Activated T-helper 1 cell treated with anti-CD3 and anti-CD28 coated beads, Interleukin-12 subunit alpha, Interleukin-12 subunit beta, Interleukin-2, Interleukin-4 antibody, amounts not matched to agents 30 ng/mL and 10 ng/mL and 1 ng/mL, durations not matched to agents 14 hours and 24 hours and 36 hours (primary cell): ENCODE measurements at regions of chr5 and their contacts with region 1.

Region 1: GRCh38 chr5:101942321-101943215 is 353.5 kb downstream of the SLCO4C1 start:
- DNase-seq: no peak
- H3K4me3 Mint-ChIP-seq: no peak overlapping the region
- H3K27ac Mint-ChIP-seq: no peak overlapping the region
- H3K4me1 Mint-ChIP-seq: peaks cover 8% of the 10 kb centered on the region
- H3K27me3 Mint-ChIP-seq: no peaks in the 10 kb centered on the region

Region 2: DNA sequence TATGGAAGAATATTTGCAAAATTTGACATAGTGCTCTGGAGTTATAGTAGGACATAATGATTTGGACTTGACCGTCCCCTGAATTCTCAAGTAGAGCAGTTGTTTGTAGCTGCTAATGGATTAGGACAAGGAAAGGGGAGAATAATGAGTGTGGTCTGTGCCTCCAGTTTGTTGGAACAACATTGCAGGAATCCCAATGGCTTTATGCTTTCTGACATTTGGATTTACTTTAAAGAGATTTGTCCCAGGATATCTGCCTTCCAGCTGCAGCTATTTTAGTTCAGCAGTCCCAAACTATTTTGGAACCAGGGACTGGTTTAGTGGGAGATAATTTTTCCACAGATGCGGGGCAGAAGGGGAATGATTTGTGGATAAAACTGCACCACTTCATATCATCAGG is 294.7 kb before region 1 on chr5:
- intact Hi-C with region 1: no loop called
- DNase-seq: no peak
- H3K4me3 Mint-ChIP-seq: no peak overlapping the region
- H3K27ac Mint-ChIP-seq: no peak overlapping the region
- H3K4me1 Mint-ChIP-seq: no peaks in the 10 kb centered on the region
- H3K27me3 Mint-ChIP-seq: no peaks in the 10 kb centered on the region

Region 3: DNA sequence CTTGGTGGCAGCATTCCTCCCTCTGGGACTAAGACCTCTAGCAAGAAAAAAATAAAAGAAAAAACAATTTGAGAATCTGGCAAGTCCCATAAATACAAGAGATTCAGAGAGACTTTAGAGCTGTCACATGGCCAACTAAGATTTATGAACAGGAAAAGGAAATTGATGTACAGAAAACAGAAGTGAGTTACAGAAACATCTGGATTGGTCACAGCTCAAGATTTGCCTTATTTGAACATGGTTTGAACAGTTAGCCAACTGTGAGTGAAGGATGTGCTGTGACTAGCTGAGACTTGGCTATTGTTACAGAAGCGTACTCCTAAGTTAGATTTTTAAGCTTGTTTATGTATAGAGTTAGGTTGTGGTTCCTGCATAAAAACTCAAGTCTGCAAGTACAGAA is 13.3 kb after region 1 on chr5:
- intact Hi-C with region 1: no loop called
- DNase-seq: no peak
- H3K4me3 Mint-ChIP-seq: no peak overlapping the region
- H3K27ac Mint-ChIP-seq: no peak overlapping the region
- H3K4me1 Mint-ChIP-seq: no peaks in the 10 kb centered on the region
- H3K27me3 Mint-ChIP-seq: no peaks in the 10 kb centered on the region

Region 4: DNA sequence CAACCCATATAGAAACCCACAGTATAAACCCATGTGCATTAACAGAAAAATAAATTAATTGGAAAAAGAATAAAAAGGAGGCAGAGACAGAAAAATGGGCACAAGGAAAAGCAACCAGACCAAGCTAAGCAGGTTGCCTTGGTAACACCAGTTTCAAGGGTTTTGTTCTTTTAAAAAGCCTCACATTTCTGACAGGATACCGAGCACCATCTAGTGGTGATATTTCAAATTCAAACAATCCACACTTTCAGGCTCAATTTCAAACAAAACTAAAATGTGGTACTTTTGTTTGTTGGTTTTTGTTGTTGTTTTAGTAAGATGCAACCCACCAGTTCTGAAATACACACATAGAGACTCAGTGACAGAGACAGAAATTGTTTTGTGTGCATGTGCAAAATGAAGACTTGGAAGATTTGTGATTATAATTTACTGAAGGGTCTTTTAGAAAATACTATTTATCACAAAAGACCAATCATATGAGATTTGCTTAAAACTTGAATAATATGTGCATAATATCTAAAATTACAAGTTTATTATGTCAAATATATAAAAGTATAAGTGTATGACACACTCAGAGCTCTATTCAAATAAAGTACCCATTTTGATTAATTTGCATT is 35.3 kb after region 1 on chr5:
- intact Hi-C with region 1: loop called (anchors 1 kb)
- DNase-seq: no peak
- H3K4me3 Mint-ChIP-seq: no peak overlapping the region
- H3K27ac Mint-ChIP-seq: no peak overlapping the region
- H3K4me1 Mint-ChIP-seq: no peaks in the 10 kb centered on the region
- H3K27me3 Mint-ChIP-seq: no peaks in the 10 kb centered on the region

Region 5: GRCh38 chr5:102077920-102078319 is 135.4 kb after region 1 on chr5:
- intact Hi-C with region 1: no loop called
- DNase-seq: no peak
- H3K4me3 Mint-ChIP-seq: no peak overlapping the region
- H3K27ac Mint-ChIP-seq: no peak overlapping the region
- H3K4me1 Mint-ChIP-seq: no peaks in the 10 kb centered on the region
- H3K27me3 Mint-ChIP-seq: no peaks in the 10 kb centered on the region

Region 6: GRCh38 chr5:102153003-102153759 is 210.6 kb after region 1 on chr5:
- intact Hi-C with region 1: loop called (anchors 1 kb)
- DNase-seq: no peak
- H3K4me3 Mint-ChIP-seq: no peak overlapping the region
- H3K27ac Mint-ChIP-seq: no peak overlapping the region
- H3K4me1 Mint-ChIP-seq: no peaks in the 10 kb centered on the region
- H3K27me3 Mint-ChIP-seq: no peaks in the 10 kb centered on the region

Region 7: GRCh38 chr5:102223542-102224477 is 281.2 kb after region 1 on chr5:
- intact Hi-C with region 1: loop called (anchors 2 kb)
- DNase-seq: no peak
- H3K4me3 Mint-ChIP-seq: no peak overlapping the region
- H3K27ac Mint-ChIP-seq: no peak overlapping the region
- H3K4me1 Mint-ChIP-seq: no peaks in the 10 kb centered on the region
- H3K27me3 Mint-ChIP-seq: peaks cover 6% of the 10 kb centered on the region